ENCODE measurements at regions of chr2 and their contacts with region 1.

Region 1: GRCh38 chr2:84022810-84023431 is 436.2 kb downstream of the SUCLG1 start:
- DNase-seq: peak; percentile 44
- H3K4me3 ChIP-seq: no peak overlapping the region
- H3K27ac ChIP-seq: no peak overlapping the region
- H3K4me1 ChIP-seq: no peaks in the 10 kb centered on the region
- CTCF ChIP-seq: peak; percentile 89

Region 2: DNA sequence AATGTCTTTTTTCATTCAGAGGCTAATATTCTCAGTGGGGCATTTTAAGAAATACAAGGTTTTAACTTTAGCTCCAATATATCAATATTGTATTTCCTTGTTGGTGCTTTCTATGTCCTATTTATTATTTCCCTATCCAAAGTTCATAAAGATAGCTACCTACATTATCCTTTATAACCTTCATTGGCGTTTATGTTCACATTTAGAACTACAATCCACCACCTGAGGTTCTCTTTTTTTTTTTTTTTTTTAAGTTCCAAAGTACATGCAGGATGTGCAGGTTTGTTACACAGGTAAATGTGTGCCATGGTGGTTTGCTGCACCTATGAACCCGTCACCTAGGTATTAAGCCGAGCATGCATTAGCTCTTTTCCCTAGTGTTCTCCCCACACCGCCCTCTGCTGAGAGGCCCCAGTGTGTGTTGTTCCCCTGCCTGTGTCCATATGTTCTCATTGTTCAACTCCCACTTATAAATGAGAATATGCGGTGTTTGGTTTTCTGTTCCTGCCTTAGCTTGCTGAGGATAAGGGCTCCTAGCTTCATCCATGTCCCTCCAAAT is 258.4 kb before region 1 on chr2:
- CTCF ChIA-PET with region 1: no interaction called
- POLR2A ChIA-PET with region 1: no interaction called
- intact Hi-C with region 1: no loop called
- DNase-seq: no peak
- H3K4me3 ChIP-seq: no peak overlapping the region
- H3K27ac ChIP-seq: no peak overlapping the region
- H3K4me1 ChIP-seq: no peaks in the 10 kb centered on the region
- CTCF ChIP-seq: no peak

Region 3: GRCh38 chr2:84052043-84052442 is 29.1 kb after region 1 on chr2:
- CTCF ChIA-PET with region 1: no interaction called
- POLR2A ChIA-PET with region 1: no interaction called
- intact Hi-C with region 1: no loop called
- DNase-seq: no peak
- H3K4me3 ChIP-seq: no peak overlapping the region
- H3K27ac ChIP-seq: no peak overlapping the region
- H3K4me1 ChIP-seq: no peaks in the 10 kb centered on the region
- CTCF ChIP-seq: no peak

Region 4: DNA sequence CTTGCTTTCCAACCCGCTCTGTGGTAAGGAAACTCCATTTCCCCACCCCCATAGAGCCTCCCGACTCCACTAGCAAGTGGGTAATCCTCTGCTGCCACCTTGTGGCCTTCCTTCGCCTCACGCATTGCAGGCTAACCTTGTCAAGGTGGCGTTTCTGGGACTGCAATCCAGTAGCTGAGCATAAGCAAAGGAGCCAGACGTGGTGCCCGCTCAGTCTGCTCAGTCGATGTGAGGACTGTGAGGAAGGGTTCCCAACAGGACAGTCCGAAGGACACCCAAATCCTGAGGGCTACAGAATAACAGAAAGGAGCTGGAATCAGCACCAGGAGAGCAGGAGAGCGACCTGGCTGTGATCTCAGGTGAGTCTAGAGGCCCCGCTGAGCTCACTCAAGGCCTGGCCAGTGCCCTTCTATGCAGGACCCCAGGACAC is 292.0 kb after region 1 on chr2:
- CTCF ChIA-PET with region 1: no interaction called
- POLR2A ChIA-PET with region 1: interaction called, 3 read pairs
- intact Hi-C with region 1: loop called (anchors 2 kb)
- DNase-seq: peak; percentile 79
- H3K4me3 ChIP-seq: no peak overlapping the region
- H3K27ac ChIP-seq: no peak overlapping the region
- H3K4me1 ChIP-seq: no peaks in the 10 kb centered on the region
- CTCF ChIP-seq: peak; percentile 92